Calu3 (cell line): ENCODE measurements at regions of chr1 and their contacts with region 1.

Region 1: GRCh38 chr1:183030053-183030452 is 6.8 kb downstream of the LAMC1 start:
- DNase-seq: no peak
- H3K4me3 Mint-ChIP-seq: peak overlapping the region; percentile 94
- H3K27ac Mint-ChIP-seq: no peak overlapping the region
- H3K4me1 Mint-ChIP-seq: peaks cover 72% of the 10 kb centered on the region
- H3K27me3 Mint-ChIP-seq: no peaks in the 10 kb centered on the region
- CTCF ChIP-seq: no peak

Region 2: DNA sequence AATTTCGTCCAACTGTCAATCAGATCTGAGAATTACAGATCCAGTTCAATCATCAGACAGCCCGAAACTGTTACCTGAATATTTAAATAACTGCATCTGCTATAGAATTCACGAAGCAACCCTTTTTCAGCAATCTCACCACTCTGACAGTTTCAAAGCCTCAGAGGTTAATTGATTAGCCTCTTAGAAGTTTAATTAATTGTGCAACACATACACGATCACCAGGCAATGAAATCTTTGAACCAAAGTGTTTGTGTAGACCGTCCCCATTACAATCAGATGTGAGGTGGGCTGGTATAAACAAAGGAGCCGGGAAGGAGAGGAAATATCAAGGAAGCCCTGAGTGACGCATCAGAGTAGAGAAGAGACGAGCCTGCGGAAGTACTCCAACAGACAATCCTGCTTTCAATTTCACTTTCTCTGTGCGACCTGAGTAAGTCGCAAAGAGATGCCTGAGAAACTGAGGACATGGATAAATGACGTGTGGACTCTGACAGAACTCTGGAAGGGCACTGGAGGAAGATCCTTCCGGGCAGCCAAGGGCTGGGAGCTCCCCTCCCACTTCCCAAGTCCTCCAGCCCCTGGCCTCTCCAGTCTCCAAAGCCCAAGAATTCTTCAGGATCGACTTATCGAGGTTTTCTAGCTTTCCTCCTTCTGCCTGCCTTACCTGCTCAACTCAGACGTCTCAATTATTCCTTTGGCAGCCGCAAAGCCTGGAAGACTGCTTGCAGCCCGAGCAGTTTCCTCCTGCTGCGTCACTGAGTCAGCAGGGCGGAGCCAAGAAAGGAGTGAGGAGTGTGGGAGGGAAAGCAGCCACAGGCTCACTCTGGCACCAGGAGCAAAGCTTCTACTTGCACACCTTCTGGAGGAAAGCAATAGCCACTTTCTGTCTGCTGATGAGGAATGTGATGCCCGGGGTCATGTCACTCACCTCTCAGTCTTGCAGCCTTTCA is 441.3 kb before region 1 on chr1 and contains the start of gene RNASEL:
- CTCF ChIA-PET with region 1: no interaction called
- intact Hi-C with region 1: no loop called
- DNase-seq: peak; percentile 81
- H3K4me3 Mint-ChIP-seq: peak within 1 kb of the TSS; percentile 90
- H3K27ac Mint-ChIP-seq: peak within 1 kb of the TSS; percentile 95
- H3K4me1 Mint-ChIP-seq: no peaks in the 10 kb centered on the region
- H3K27me3 Mint-ChIP-seq: peaks cover 25% of the 10 kb centered on the region
- CTCF ChIP-seq: no peak
- total RNA-seq, gene RNASEL: 7.0 and 10.0 TPM in 2 replicates

Region 3: GRCh38 chr1:183070923-183071618 is 41.0 kb after region 1 on chr1:
- CTCF ChIA-PET with region 1: no interaction called
- intact Hi-C with region 1: loop called (anchors 5 kb)
- DNase-seq: peak; percentile 24
- H3K4me3 Mint-ChIP-seq: peak overlapping the region; percentile 56
- H3K27ac Mint-ChIP-seq: peak overlapping the region; percentile 90
- H3K4me1 Mint-ChIP-seq: peaks cover 68% of the 10 kb centered on the region
- H3K27me3 Mint-ChIP-seq: no peaks in the 10 kb centered on the region
- CTCF ChIP-seq: no peak